A673 (cell line): ENCODE measurements at regions of chr10 and their contacts with region 1.

Region 1: GRCh38 chr10:31864834-31865518 is 63.7 kb downstream of the ARHGAP12 start:
- DNase-seq: peak; percentile 26
- H3K4me3 ChIP-seq: peak overlapping the region; percentile 7
- H3K27ac ChIP-seq: peak overlapping the region; percentile 20
- H3K4me1 ChIP-seq: peaks cover 33% of the 10 kb centered on the region
- H3K27me3 ChIP-seq: no peaks in the 10 kb centered on the region
- CTCF ChIP-seq: no peak

Region 2: GRCh38 chr10:31896947-31897384 is 32.0 kb after region 1 on chr10:
- CTCF ChIA-PET with region 1: no interaction called
- POLR2A ChIA-PET with region 1: no interaction called
- intact Hi-C with region 1: no loop called
- DNase-seq: no peak
- H3K4me3 ChIP-seq: no peak overlapping the region
- H3K27ac ChIP-seq: no peak overlapping the region
- H3K4me1 ChIP-seq: no peaks in the 10 kb centered on the region
- H3K27me3 ChIP-seq: no peaks in the 10 kb centered on the region
- CTCF ChIP-seq: no peak

Region 3: DNA sequence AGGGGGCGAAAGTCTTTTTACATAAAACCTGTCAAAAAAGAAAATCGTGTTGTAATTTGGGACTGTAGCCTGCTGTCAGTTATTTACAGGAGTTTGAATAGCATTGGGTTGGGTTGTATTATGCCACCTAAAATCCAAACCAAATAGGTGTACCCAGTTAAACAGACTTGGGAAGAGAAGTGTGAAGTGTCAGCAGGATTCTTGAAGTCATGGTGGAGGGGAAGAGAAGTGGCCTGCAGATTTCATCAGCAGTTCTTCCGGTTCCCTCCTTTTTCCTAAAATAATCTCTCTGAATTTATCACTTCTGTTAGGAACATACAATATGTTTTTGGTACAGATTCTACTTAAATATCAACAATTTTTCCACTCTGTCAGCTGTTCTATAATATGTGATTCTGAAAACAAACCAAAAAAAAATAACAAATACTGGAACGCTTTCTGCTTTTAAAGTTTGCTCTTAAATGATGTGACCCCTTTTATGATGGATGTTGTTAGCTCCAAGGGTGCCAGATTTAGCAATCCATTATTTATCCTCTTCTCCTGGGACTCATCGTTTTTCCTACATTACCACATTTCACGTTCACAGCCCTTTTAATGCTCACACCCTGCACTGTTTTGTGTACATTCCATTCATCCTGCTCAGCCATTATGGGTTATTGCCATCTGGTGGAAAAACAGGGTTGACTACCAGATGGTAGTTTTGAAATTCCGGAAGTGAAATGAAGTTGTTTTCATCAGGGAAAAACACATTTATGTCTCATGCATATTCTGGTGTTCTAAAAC is 82.4 kb after region 1 on chr10:
- CTCF ChIA-PET with region 1: interaction called, 3 read pairs
- POLR2A ChIA-PET with region 1: no interaction called
- intact Hi-C with region 1: loop called (anchors 1 kb)
- DNase-seq: peak; percentile 87
- H3K4me3 ChIP-seq: no peak overlapping the region
- H3K27ac ChIP-seq: peak overlapping the region; percentile 14
- H3K4me1 ChIP-seq: peaks cover 38% of the 10 kb centered on the region
- H3K27me3 ChIP-seq: no peaks in the 10 kb centered on the region
- CTCF ChIP-seq: peak; percentile 73

Region 4: GRCh38 chr10:32005050-32005449 is 140.1 kb after region 1 on chr10:
- CTCF ChIA-PET with region 1: interaction called, 6 read pairs
- POLR2A ChIA-PET with region 1: no interaction called
- intact Hi-C with region 1: loop called (anchors 5 kb)
- DNase-seq: peak; percentile 61
- H3K4me3 ChIP-seq: no peak overlapping the region
- H3K27ac ChIP-seq: no peak overlapping the region
- H3K4me1 ChIP-seq: no peaks in the 10 kb centered on the region
- H3K27me3 ChIP-seq: no peaks in the 10 kb centered on the region
- CTCF ChIP-seq: peak; percentile 73

Region 5: DNA sequence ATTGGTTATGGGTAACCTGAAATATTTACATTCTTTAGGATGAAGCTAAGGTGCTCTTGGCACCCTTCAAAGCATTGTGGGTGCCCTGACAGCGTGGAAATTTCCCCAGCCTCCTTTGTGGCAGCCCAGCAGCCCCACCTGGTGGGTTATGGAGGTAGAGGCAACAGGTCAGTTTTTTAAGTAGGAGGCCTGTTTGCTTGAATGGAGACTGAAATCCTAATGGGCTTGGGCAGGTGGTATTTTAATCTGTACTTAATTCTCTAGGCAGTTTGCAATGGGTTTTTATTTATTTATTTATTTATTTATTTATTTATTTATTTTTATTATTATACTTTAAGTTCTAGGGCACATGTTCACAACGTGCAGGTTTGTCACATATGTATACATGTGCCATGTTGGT is 342.6 kb after region 1 on chr10:
- CTCF ChIA-PET with region 1: no interaction called
- POLR2A ChIA-PET with region 1: no interaction called
- intact Hi-C with region 1: loop called (anchors 10 kb)
- DNase-seq: peak; percentile 75
- H3K4me3 ChIP-seq: no peak overlapping the region
- H3K27ac ChIP-seq: no peak overlapping the region
- H3K4me1 ChIP-seq: no peaks in the 10 kb centered on the region
- H3K27me3 ChIP-seq: no peaks in the 10 kb centered on the region
- CTCF ChIP-seq: peak; percentile 69